PC-3 (cell line): ENCODE measurements at regions of chr1 and their contacts with region 1.

Region 1: GRCh38 chr1:16440470-16441281 is at the start of gene NECAP2:
- DNase-seq: peak; percentile 93
- ATAC-seq: peak; percentile 95
- H3K4me3 ChIP-seq: peak within 1 kb of the TSS; percentile 90
- H3K27ac ChIP-seq: peak within 1 kb of the TSS; percentile 19; the same call in 1 of the 2 replicates
- H3K4me1 ChIP-seq: peaks cover 3% of the 10 kb centered on the region
- H3K27me3 ChIP-seq: no peaks in the 10 kb centered on the region
- CTCF ChIP-seq: peak; percentile 82
- total RNA-seq, gene NECAP2: 65.0 and 70.0 TPM in 2 replicates

Region 2: DNA sequence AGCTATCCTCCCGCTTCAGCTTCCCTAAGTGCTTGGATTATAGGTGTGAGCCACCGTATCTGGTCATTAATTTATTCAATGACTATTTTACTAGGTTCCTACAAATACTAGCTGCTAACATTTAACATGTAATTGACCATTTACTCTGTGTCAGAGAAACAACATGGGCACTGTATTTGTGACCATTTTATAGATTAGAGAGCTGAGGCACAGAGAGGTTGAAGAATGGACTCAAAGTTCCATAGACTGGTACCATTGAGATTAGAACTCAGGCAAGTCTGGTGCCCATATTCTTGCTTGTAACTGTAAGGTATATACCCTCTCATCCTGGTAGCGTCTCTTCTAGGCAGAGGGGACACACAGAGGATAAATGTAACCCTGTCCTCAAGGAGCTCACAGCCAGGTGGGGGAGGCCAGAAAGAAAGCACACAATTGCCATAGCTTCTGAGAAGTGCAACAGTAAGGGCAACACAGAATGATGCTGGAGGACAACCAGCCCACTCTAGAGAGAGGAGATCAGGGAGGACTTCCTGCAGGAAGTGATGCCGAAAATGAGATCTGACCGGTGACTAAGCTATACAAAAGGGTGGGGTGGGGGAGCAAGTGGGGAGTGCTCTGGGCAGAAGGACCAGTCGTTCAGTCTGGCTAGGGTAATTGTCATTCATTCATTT is 432.9 kb before region 1 on chr1:
- CTCF ChIA-PET with region 1: no interaction called
- POLR2A ChIA-PET with region 1: no interaction called
- intact Hi-C with region 1: no loop called
- DNase-seq: no peak
- ATAC-seq: peak; percentile 25
- H3K4me3 ChIP-seq: no peak overlapping the region
- H3K27ac ChIP-seq: 0 out of 2 replicates have a peak overlapping the region, but pooled peaks have one; percentile 7
- H3K4me1 ChIP-seq: peaks cover 11% of the 10 kb centered on the region
- H3K27me3 ChIP-seq: no peaks in the 10 kb centered on the region
- CTCF ChIP-seq: no peak

Region 3: DNA sequence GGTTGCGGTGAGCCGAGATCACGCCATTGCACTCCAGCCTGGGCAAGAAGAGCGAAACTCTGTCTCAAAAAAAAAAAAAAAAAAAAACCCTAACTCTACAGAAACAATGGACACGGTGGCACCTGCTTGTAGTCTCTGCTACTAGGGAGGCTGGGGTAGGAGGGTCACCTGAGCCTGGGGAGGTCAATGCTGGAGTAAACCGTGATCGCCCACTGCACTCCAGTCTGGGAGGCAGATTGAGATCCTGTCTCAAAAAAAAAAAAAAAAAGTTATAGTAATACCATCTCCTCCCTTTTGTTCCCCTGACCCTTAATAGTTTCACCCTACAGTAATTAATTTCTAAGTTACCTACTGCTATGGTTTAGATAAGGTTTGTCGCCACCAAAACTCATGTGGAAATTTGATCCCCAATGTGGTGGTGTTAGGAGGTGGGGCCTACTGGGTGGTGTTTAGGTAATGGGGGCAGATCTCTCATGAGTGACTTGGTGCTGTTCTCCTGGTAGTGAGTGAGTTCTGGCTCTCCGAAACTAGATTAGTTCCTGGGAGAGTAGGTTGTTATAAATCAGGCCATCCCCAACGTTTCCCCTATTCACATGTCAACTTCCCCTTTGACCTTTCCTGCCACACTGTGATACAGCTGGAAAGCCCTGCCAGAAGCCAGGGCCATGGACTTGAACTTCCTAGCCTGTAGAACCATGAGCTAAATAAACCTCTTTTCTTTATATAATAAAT is 98.2 kb before region 1 on chr1:
- CTCF ChIA-PET with region 1: no interaction called
- POLR2A ChIA-PET with region 1: no interaction called
- intact Hi-C with region 1: no loop called
- DNase-seq: no peak
- ATAC-seq: no peak
- H3K4me3 ChIP-seq: no peak overlapping the region
- H3K27ac ChIP-seq: no peak overlapping the region
- H3K4me1 ChIP-seq: no peaks in the 10 kb centered on the region
- H3K27me3 ChIP-seq: no peaks in the 10 kb centered on the region
- CTCF ChIP-seq: no peak

Region 4: DNA sequence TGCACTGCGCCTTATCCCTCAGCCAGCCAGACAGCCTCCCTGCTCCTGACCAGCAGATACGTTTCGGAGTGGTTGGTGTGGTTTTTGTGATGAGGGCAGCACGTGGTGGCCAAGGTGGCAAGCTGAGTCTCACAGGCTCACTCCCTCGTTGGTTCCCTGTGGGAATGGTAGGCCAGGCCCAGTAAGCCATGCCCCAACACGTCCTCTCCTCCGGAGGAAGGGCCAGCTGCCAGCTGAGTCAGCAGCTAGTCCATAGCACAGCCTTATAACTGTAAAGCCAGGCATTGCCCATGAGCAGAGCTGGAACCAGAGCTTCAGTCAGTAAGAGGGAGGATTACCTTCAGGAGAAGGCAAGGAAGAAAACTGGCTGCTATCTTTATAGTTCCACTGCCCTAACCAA is 44.1 kb before region 1 on chr1:
- CTCF ChIA-PET with region 1: no interaction called
- POLR2A ChIA-PET with region 1: no interaction called
- intact Hi-C with region 1: loop called (anchors 2 kb)
- DNase-seq: peak; percentile 28
- ATAC-seq: peak; percentile 84
- H3K4me3 ChIP-seq: no peak overlapping the region
- H3K27ac ChIP-seq: no peak overlapping the region
- H3K4me1 ChIP-seq: no peaks in the 10 kb centered on the region
- H3K27me3 ChIP-seq: no peaks in the 10 kb centered on the region
- CTCF ChIP-seq: no peak

Region 5: GRCh38 chr1:16607433-16607851 is 166.8 kb after region 1 on chr1:
- CTCF ChIA-PET with region 1: no interaction called
- POLR2A ChIA-PET with region 1: no interaction called
- intact Hi-C with region 1: loop called (anchors 5 kb)
- DNase-seq: no peak
- ATAC-seq: no peak
- H3K4me3 ChIP-seq: no peak overlapping the region
- H3K27ac ChIP-seq: peak overlapping the region; percentile 87
- H3K4me1 ChIP-seq: peaks cover 63% of the 10 kb centered on the region
- H3K27me3 ChIP-seq: no peaks in the 10 kb centered on the region
- CTCF ChIP-seq: no peak